ENCODE measurements at regions of chr15 and their contacts with region 1.

Region 1: DNA sequence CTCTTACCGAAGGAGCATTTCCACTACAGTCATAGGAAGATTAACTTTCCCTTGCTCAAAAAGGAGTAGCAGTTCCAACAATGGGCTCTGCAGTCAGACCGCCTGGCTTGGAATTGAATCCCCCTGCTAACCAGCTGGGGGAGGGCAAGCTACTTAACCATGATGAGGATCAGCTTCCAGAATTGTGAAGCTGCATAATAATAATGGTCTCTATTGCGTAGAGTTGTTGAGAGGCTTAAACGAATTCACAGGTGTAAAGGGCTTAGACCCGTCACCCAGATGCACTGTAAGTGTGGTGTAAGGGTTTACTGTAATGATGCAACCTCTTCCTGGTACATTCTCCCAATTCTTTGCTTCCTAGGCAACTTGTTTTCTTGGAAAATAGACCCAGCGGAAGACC is 185.2 kb upstream of the RGMA start:
- DNase-seq: no peak
- H3K4me3 ChIP-seq: no peak overlapping the region
- H3K27ac ChIP-seq: no peak overlapping the region
- H3K4me1 ChIP-seq: no peaks in the 10 kb centered on the region
- H3K27me3 ChIP-seq: no peaks in the 10 kb centered on the region
- CTCF ChIP-seq: no peak
- EP300 ChIP-seq: no peak
- POLR2A ChIP-seq: no peak

Region 2: GRCh38 chr15:93109336-93110102 is 164.7 kb before region 1 on chr15:
- intact Hi-C with region 1: loop called (anchors 10 kb)
- DNase-seq: no peak
- H3K4me3 ChIP-seq: no peak overlapping the region
- H3K27ac ChIP-seq: no peak overlapping the region
- H3K4me1 ChIP-seq: no peaks in the 10 kb centered on the region
- H3K27me3 ChIP-seq: peaks cover 0 to 6% (median 0%) of the 10 kb centered on the region in 4 donors
- CTCF ChIP-seq: no peak
- EP300 ChIP-seq: no peak
- POLR2A ChIP-seq: no peak